MCF 10A (cell line): ENCODE measurements at regions of chr6 and their contacts with region 1.

Region 1: GRCh38 chr6:96897383-96898240 is at the start of gene NDUFAF4:
- DNase-seq: peak; percentile 94
- H3K4me3 Mint-ChIP-seq: peak within 1 kb of the TSS; percentile 82
- H3K27ac Mint-ChIP-seq: peak within 1 kb of the TSS; percentile 44
- H3K4me1 Mint-ChIP-seq: peaks cover 16% of the 10 kb centered on the region
- H3K27me3 Mint-ChIP-seq: peaks cover 21% of the 10 kb centered on the region
- CTCF ChIP-seq: peak; percentile 81
- total RNA-seq, gene NDUFAF4: 29.8 and 42.5 TPM in 2 replicates

Region 2: GRCh38 chr6:96542702-96543101 is 354.9 kb before region 1 on chr6:
- CTCF ChIA-PET with region 1: interaction called, 5 read pairs
- POLR2A ChIA-PET with region 1: no interaction called
- intact Hi-C with region 1: loop called (anchors 10 kb)
- DNase-seq: no peak
- H3K4me3 Mint-ChIP-seq: no peak overlapping the region
- H3K27ac Mint-ChIP-seq: no peak overlapping the region
- H3K4me1 Mint-ChIP-seq: no peaks in the 10 kb centered on the region
- H3K27me3 Mint-ChIP-seq: no peaks in the 10 kb centered on the region
- CTCF ChIP-seq: no peak

Region 3: DNA sequence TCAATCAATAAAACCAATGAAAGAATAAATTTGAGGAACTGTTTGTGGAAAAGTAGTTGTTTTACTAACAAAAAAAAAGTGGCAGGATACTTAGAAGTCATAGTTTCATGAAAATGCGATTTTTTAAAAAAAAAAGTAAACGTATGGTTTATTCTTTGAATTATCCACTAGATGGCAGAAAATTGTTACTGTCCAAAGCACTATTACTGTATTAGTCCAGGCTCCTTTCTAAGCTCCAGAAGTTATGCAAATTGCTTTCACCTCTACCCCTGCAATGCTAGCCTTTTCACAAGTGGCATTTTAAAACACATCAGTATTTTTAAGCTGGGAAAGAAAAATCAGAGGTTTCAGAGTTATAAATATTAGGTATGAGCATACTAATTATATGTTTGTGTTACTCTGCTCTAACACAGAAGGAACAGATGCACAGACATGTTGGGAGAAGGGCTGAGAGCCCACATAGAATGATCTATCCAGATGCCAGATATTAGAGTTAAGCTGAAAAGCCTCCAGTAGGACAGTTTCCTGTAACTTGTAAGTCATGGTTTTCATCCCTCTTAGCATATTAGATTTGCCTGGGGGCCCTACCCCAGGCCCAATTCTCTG is 270.8 kb before region 1 on chr6:
- CTCF ChIA-PET with region 1: interaction called, 29 read pairs
- POLR2A ChIA-PET with region 1: no interaction called
- intact Hi-C with region 1: loop called (anchors 1 kb)
- DNase-seq: peak; percentile 31
- H3K4me3 Mint-ChIP-seq: no peak overlapping the region
- H3K27ac Mint-ChIP-seq: no peak overlapping the region
- H3K4me1 Mint-ChIP-seq: no peaks in the 10 kb centered on the region
- H3K27me3 Mint-ChIP-seq: peaks cover 70% of the 10 kb centered on the region
- CTCF ChIP-seq: peak; percentile 41

Region 4: GRCh38 chr6:96837081-96837971 is 60.3 kb before region 1 on chr6 and contains the start of gene GPR63:
- CTCF ChIA-PET with region 1: interaction called, 4 read pairs
- POLR2A ChIA-PET with region 1: interaction called, 9 read pairs
- intact Hi-C with region 1: loop called (anchors 2 kb)
- DNase-seq: peak; percentile 30
- H3K4me3 Mint-ChIP-seq: peak within 1 kb of the TSS; percentile 93
- H3K27ac Mint-ChIP-seq: no peak within 1 kb of the TSS
- H3K4me1 Mint-ChIP-seq: no peaks in the 10 kb centered on the region
- H3K27me3 Mint-ChIP-seq: peaks cover 58% of the 10 kb centered on the region
- CTCF ChIP-seq: no peak
- total RNA-seq, gene GPR63: 0.42 and 0.54 TPM in 2 replicates

Region 5: DNA sequence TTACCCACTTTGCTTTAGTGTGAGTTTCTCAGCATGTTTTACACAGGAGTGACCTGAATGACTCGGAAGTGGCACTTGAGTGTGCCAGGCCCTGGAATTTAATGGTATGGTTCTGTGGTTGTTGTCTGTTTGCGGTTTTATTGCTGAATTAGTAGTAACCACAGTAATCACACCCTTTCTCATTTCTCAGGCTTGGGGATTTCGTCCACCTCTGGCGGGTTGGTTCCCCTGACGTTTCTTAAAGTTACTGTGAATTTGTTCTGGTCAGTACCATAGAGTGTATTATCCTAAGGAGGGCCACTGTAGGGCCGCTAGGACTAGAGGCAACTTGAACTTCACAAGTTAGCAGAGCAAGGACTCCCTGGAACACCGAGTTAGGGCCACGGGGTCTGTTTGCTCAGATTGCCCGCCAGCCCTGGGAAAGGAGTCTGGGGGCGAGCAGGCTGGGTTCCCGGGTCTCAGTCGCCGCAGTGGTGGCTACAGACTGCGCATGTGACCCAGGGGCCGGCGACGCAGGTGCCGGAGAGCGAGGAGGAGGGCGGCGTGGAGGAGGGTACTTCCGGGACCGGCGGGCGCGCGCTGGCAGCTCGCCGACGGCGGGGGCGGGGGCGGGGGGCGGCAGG is 26.4 kb after region 1 on chr6:
- CTCF ChIA-PET with region 1: interaction called, 19 read pairs
- POLR2A ChIA-PET with region 1: interaction called, 4 read pairs
- intact Hi-C with region 1: no loop called
- DNase-seq: no peak
- H3K4me3 Mint-ChIP-seq: peak overlapping the region; percentile 82
- H3K27ac Mint-ChIP-seq: no peak overlapping the region
- H3K4me1 Mint-ChIP-seq: no peaks in the 10 kb centered on the region
- H3K27me3 Mint-ChIP-seq: peaks cover 100% of the 10 kb centered on the region
- CTCF ChIP-seq: no peak

Region 6: DNA sequence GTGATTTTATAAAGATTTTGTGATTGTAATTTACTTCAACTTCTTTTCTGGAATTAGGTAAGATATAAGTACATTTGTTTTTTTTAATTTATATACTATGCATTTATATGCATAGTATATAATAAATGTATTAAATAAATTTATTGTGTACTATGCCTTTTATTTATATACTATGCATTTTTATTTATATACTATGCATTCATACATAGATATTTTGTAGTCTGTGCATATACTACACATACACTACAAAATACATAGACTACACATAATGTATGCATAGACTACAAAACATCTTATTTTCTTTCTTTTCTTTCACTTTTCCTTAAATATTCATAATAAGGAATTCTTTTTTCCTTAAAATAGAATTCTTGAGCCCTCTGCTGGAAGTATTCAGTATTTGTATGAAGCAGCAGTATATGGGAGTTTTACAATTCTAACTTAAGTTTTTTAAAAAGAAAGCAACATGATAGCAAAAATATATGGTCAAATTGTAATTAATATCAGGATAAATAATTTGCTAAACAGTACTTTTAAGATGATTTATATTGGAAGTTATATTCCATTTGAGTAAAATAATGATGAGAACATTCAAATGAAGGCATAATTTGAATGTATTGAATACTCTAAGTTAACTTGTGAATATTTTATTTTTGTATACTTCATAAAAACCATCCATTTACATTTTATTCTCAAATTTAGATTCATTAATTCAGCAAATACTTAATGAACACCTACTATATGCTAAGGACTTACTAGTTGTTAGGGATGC is 156.2 kb after region 1 on chr6:
- CTCF ChIA-PET with region 1: interaction called, 82 read pairs
- POLR2A ChIA-PET with region 1: interaction called, 4 read pairs
- intact Hi-C with region 1: loop called (anchors 1 kb)
- DNase-seq: no peak
- H3K4me3 Mint-ChIP-seq: no peak overlapping the region
- H3K27ac Mint-ChIP-seq: no peak overlapping the region
- H3K4me1 Mint-ChIP-seq: no peaks in the 10 kb centered on the region
- H3K27me3 Mint-ChIP-seq: peaks cover 85% of the 10 kb centered on the region
- CTCF ChIP-seq: peak; percentile 40

Region 7: GRCh38 chr6:97059473-97059872 is 161.9 kb after region 1 on chr6:
- CTCF ChIA-PET with region 1: interaction called, 82 read pairs
- POLR2A ChIA-PET with region 1: interaction called, 4 read pairs
- intact Hi-C with region 1: loop called (anchors 1 kb)
- DNase-seq: peak; percentile 27
- H3K4me3 Mint-ChIP-seq: no peak overlapping the region
- H3K27ac Mint-ChIP-seq: no peak overlapping the region
- H3K4me1 Mint-ChIP-seq: no peaks in the 10 kb centered on the region
- H3K27me3 Mint-ChIP-seq: peaks cover 97% of the 10 kb centered on the region
- CTCF ChIP-seq: peak; percentile 44

Region 8: GRCh38 chr6:97765480-97765879 is 867.9 kb after region 1 on chr6:
- CTCF ChIA-PET with region 1: no interaction called
- POLR2A ChIA-PET with region 1: no interaction called
- intact Hi-C with region 1: no loop called
- DNase-seq: peak; percentile 28
- H3K4me3 Mint-ChIP-seq: no peak overlapping the region
- H3K27ac Mint-ChIP-seq: no peak overlapping the region
- H3K4me1 Mint-ChIP-seq: peaks cover 6% of the 10 kb centered on the region
- H3K27me3 Mint-ChIP-seq: peaks cover 46% of the 10 kb centered on the region
- CTCF ChIP-seq: no peak